Uterus (tissue), 4 donors: ENCODE measurements at regions of chr9 and their contacts with region 1.

Region 1: DNA sequence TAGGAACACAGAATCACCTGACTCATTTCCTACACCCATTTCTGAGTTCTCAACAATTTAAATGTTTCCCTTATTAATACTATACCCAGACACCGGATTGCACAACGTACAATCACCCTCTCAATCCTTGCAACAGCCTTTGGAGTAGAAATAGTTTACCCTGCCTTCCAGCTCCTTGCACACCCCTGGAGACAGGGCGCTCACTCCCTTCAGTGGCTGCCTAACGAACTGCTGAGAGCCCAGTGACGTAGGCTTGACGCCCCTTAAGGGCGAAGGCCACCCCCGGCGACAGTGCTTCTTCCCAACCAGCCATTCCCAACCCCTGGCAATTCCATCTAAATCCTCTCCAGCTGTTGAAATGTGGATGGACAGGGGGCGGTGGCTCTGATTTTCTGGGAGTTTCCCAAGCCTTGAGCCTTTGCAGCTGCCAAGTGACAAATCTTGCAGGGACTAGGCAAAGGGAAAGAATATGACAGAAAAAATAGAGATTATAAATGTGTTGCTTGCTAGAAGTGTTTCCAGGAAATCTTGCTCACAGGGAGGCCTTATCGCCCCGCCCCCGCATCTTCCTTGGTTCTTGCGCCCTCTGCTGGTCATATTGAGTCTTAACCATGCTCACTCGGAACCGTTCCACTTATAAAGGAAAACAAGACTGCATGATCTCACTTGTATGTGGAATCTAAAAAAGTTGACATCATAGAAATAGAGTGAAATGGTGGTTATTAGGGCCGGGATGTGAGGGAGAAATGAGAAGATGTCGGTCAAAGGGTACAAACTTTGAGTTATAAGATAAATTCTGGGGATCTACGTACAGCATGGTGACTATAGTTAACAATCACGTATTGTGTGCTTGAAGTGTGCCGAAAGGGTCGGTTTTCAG is 7.6 kb upstream of the BARX1 start:
- DNase-seq: peak; percentile 73 to 80
- H3K4me3 ChIP-seq: no peak overlapping the region
- H3K27ac ChIP-seq: no peak overlapping the region
- H3K4me1 ChIP-seq: peaks cover 0 to 6% of the 10 kb centered on the region in 2 donors
- H3K27me3 ChIP-seq: peaks cover 33 to 42% of the 10 kb centered on the region in 2 donors
- CTCF ChIP-seq: peak; percentile 74 to 82 (median 78)
- POLR2A ChIP-seq: no peak

Region 2: GRCh38 chr9:93682232-93682968 is 280.4 kb before region 1 on chr9:
- intact Hi-C with region 1: loop called (anchors 10 kb)
- DNase-seq: peak; percentile 27 to 49
- H3K4me3 ChIP-seq: no peak overlapping the region
- H3K27ac ChIP-seq: no peak overlapping the region
- H3K4me1 ChIP-seq: no peaks in the 10 kb centered on the region
- H3K27me3 ChIP-seq: no peaks in the 10 kb centered on the region
- CTCF ChIP-seq: peak; percentile 59 to 69 (median 64)
- POLR2A ChIP-seq: no peak

Region 3: DNA sequence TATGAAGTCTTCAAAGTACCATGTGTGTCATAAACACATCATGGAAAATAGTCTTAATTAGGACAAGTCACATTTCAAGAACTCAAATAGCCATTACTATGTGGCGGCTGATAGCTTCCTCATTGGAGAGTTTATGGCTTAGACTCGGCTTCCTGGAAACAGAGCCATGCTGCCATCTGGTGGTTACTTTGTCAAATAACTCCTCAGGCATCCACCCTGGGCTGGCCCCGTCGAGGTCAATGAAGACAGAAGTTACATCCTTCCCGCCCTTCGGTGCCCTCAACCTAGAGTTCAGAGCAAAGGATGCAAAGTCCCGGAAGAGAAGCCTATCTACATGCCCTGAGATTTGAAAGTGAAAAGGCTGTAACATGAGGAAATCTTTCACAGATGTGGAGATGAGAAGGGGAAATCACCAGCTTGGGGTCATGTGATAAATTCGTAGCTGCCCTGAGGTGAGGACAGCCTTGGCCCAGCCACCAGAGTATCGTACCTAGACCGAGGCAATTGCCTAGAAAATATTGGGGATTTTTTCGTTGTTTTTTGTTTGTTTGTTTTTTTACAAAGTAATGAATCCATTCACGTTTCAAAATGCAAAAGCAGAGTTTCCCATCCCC is 250.8 kb after region 1 on chr9:
- intact Hi-C with region 1: no loop called
- DNase-seq: peak; percentile 70 to 74
- H3K4me3 ChIP-seq: no peak overlapping the region
- H3K27ac ChIP-seq: no peak overlapping the region
- H3K4me1 ChIP-seq: no peaks in the 10 kb centered on the region
- H3K27me3 ChIP-seq: no peaks in the 10 kb centered on the region
- CTCF ChIP-seq: peak; percentile 79 to 92 (median 88)
- POLR2A ChIP-seq: no peak